MCF 10A (cell line): ENCODE measurements at regions of chr1 and their contacts with region 1.

Region 1: GRCh38 chr1:3483801-3484444 is 29.5 kb downstream of the ARHGEF16 start:
- DNase-seq: peak; percentile 72
- H3K4me3 Mint-ChIP-seq: peak overlapping the region; percentile 33
- H3K27ac Mint-ChIP-seq: peak overlapping the region; percentile 79
- H3K4me1 Mint-ChIP-seq: peaks cover 10% of the 10 kb centered on the region
- H3K27me3 Mint-ChIP-seq: no peaks in the 10 kb centered on the region
- CTCF ChIP-seq: peak; percentile 97

Region 2: GRCh38 chr1:3270403-3271245 is 213.3 kb before region 1 on chr1:
- CTCF ChIA-PET with region 1: no interaction called
- POLR2A ChIA-PET with region 1: no interaction called
- intact Hi-C with region 1: no loop called
- DNase-seq: no peak
- H3K4me3 Mint-ChIP-seq: no peak overlapping the region
- H3K27ac Mint-ChIP-seq: no peak overlapping the region
- H3K4me1 Mint-ChIP-seq: no peaks in the 10 kb centered on the region
- H3K27me3 Mint-ChIP-seq: no peaks in the 10 kb centered on the region
- CTCF ChIP-seq: no peak

Region 3: DNA sequence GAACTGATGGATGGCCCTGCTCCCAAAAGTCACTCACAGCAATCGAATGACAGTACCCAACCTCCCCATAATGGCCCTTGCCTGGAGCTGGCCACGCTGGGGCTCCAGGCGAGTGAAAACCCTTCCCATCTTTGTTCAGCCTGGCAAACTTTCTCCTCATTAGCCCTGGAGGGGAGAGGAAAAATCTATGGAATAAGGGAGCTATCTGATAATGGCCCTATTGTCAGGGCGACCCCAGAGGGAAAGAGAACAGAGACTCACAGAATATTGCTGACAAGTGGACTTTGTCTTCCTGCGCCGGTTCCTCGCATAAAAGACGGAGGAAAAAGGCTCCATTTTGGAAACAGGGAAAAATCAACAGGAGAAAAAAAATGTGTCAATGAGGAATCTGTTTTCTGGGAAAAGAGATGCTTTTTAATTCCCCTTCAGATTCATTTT is 42.5 kb before region 1 on chr1:
- CTCF ChIA-PET with region 1: no interaction called
- POLR2A ChIA-PET with region 1: no interaction called
- intact Hi-C with region 1: no loop called
- DNase-seq: no peak
- H3K4me3 Mint-ChIP-seq: no peak overlapping the region
- H3K27ac Mint-ChIP-seq: no peak overlapping the region
- H3K4me1 Mint-ChIP-seq: no peaks in the 10 kb centered on the region
- H3K27me3 Mint-ChIP-seq: peaks cover 40% of the 10 kb centered on the region
- CTCF ChIP-seq: no peak

Region 4: GRCh38 chr1:3463891-3464648 is 19.9 kb before region 1 on chr1:
- CTCF ChIA-PET with region 1: interaction called, 11 read pairs
- POLR2A ChIA-PET with region 1: interaction called, 3 read pairs
- intact Hi-C with region 1: no loop called
- DNase-seq: no peak
- H3K4me3 Mint-ChIP-seq: no peak overlapping the region
- H3K27ac Mint-ChIP-seq: no peak overlapping the region
- H3K4me1 Mint-ChIP-seq: no peaks in the 10 kb centered on the region
- H3K27me3 Mint-ChIP-seq: no peaks in the 10 kb centered on the region
- CTCF ChIP-seq: no peak

Region 5: DNA sequence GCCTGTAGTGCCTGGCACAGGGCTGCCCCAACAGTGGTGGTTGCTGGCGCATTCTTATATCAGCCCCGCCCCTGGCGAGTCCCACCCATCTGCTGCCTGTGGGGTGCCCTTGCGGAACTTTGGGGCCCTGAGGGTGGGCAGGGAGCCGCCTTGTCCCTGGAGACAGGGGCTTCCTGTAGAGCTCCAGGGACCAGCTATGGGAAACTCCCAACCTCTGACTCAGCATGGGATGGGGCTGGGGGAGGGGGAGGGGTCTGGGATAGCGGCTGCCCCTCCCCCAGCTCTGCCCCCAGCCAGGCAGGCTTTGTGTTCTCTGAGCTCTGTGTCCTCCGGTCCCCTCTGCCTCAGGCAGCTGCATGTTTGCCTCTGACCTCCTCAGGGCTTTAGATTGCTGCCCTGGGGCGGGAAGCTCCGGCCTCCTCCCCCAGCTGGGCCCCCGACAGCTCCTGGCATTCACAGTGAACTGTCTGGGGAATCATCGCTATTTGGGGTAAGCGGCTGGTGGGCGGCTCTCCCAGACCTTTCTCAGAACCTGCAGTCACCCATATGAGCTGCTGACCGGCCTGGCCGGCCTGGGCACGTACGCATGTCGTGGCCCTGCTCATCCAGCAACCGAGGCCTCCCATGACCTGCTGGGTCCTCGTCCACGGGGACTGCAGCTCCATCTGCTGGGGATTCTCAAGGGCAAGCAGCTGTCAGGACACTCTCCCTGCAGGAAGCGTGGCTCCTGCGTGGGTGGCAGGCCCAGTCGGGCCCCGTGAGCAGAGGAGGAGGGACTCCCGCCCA is 12.4 kb before region 1 on chr1:
- CTCF ChIA-PET with region 1: interaction called, 14 read pairs
- POLR2A ChIA-PET with region 1: interaction called, 17 read pairs
- intact Hi-C with region 1: no loop called
- DNase-seq: peak; percentile 53
- H3K4me3 Mint-ChIP-seq: no peak overlapping the region
- H3K27ac Mint-ChIP-seq: no peak overlapping the region
- H3K4me1 Mint-ChIP-seq: peaks cover 22% of the 10 kb centered on the region
- H3K27me3 Mint-ChIP-seq: no peaks in the 10 kb centered on the region
- CTCF ChIP-seq: peak; percentile 29